Activated naive CD4-positive, alpha-beta T cell treated with anti-CD3 and anti-CD28 coated beads, Interleukin-2, amount 10 ng/mL, durations not matched to agents 7 days and 5 days (primary cell): ENCODE measurements at regions of chr5 and their contacts with region 1.

Region 1: DNA sequence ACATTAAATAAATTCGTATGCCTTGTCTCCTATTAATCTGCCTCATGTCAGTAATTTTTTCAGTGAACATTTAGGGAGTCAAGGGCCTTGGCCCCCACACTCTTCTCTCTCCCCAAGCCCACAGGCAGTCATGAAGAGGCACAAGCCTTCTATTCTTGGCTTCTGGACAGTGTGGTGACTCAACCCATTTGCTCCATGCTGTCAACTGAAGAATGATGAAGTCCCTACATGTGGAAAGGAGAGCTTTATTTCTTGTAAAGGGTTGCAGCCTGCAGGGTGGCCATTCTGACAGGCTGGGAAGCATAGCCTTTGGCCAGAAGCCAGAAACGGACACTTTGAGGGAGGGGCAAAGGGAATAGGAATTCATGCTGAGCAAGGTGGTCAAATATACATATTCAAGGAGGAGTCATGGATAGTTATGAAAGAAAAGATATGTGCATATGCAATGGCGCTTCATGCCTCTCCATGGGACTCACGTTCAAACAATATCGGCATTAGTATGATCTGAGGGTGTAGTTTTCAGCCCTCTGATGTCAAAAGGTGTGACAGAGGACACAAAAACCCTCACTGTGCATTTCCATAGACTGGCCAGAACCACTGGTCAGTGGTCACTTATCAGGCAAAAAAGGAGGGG is 31.3 kb downstream of the ANKRA2 start:
- DNase-seq: no peak
- H3K4me3 Mint-ChIP-seq: no peak overlapping the region
- H3K27ac Mint-ChIP-seq: no peak overlapping the region
- H3K4me1 Mint-ChIP-seq: no peaks in the 10 kb centered on the region
- H3K27me3 Mint-ChIP-seq: peaks cover 36% of the 10 kb centered on the region

Region 2: DNA sequence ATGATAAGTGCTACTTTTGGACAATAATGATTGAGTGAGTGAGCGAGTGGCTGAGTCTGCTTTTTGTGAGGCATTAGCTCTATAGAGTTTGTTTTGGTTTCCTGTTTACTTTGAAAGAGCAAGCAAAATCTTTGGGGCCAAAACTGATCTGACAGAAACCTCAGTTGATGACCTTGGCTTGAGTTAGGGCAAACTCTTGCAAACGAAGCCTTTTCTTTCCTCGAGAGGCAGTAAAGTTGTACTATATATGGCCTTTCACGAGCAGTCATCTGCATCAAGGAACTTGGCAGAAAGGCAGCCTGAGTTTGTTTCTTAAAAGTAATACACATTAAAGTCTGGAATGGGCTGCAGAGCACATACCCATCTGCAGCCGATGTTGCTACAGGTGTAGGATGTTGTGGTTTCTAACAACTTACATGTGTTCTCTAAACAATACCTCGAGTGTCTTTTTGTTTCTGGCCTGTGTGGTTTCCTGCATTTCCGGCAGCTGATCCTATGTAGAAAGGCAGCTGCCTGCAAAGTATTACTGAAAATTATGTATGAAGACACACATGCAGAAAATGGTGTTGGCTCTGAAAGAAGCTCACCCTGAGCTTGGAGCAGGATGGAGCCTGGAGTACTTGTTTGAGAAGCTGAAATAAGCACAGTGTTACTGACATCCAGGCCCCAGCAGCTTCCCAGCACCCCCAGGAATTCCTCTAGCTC is 146.4 kb before region 1 on chr5:
- CTCF ChIA-PET with region 1: no interaction called
- DNase-seq: peak; percentile 84
- H3K4me3 Mint-ChIP-seq: peak overlapping the region; percentile 7
- H3K27ac Mint-ChIP-seq: peak overlapping the region; percentile 86
- H3K4me1 Mint-ChIP-seq: peaks cover 29% of the 10 kb centered on the region
- H3K27me3 Mint-ChIP-seq: peaks cover 54% of the 10 kb centered on the region

Region 3: GRCh38 chr5:73519531-73520283 is 14.4 kb before region 1 on chr5:
- CTCF ChIA-PET with region 1: interaction called, 51 read pairs
- DNase-seq: peak; percentile 81
- H3K4me3 Mint-ChIP-seq: peak overlapping the region; percentile 40
- H3K27ac Mint-ChIP-seq: peak overlapping the region; percentile 39
- H3K4me1 Mint-ChIP-seq: peaks cover 8% of the 10 kb centered on the region
- H3K27me3 Mint-ChIP-seq: peaks cover 5% of the 10 kb centered on the region